ENCODE measurements at regions of chr2 and their contacts with region 1.

Region 1: DNA sequence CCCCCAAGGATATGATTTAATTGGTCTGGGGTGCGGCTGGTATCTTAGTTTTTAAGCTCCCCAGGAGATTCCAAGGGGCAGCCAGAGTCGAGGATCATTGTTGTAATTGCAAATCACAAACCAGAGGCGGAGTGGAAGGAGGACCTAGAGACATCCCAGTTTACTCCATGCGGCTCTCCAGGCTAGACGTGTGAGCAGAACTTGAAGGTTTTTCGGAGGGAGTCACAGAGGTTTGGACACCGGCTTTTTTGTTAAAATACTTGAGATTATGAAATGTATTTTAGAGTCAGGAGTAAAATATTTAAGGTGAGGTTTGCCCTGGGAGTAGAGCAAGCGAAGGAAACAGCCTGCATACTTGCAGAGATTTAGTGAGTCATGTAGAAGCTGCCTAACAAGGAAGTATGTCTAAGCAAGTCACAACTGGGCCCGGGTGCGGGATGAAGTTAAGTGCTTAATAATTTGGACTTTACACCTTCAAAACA is 39.5 kb downstream of the TGOLN2 start:
- DNase-seq: no peak
- H3K4me3 ChIP-seq: no peak overlapping the region
- H3K27ac ChIP-seq: no peak overlapping the region
- H3K4me1 ChIP-seq: no peaks in the 10 kb centered on the region
- H3K27me3 ChIP-seq: no peaks in the 10 kb centered on the region
- CTCF ChIP-seq: no peak
- POLR2A ChIP-seq: no peak

Region 2: GRCh38 chr2:84495539-84496146 is 792.6 kb before region 1 on chr2:
- CTCF ChIA-PET with region 1: no interaction called
- POLR2A ChIA-PET with region 1: no interaction called
- dilution Hi-C with region 1: no loop called
- intact Hi-C with region 1: loop called (anchors 10 kb)
- DNase-seq: peak; percentile 80
- H3K4me3 ChIP-seq: no peak overlapping the region
- H3K27ac ChIP-seq: peak overlapping the region; percentile 99
- H3K4me1 ChIP-seq: peaks cover 21% of the 10 kb centered on the region
- H3K27me3 ChIP-seq: no peaks in the 10 kb centered on the region
- CTCF ChIP-seq: peak; percentile 38 to 44
- POLR2A ChIP-seq: no peak

Region 3: GRCh38 chr2:85181134-85181631 is 107.1 kb before region 1 on chr2:
- CTCF ChIA-PET with region 1: interaction called, 4 read pairs
- POLR2A ChIA-PET with region 1: no interaction called
- dilution Hi-C with region 1: no loop called
- intact Hi-C with region 1: loop called (anchors 2 kb)
- DNase-seq: no peak
- H3K4me3 ChIP-seq: no peak overlapping the region
- H3K27ac ChIP-seq: no peak overlapping the region
- H3K4me1 ChIP-seq: peaks cover 42% of the 10 kb centered on the region
- H3K27me3 ChIP-seq: no peaks in the 10 kb centered on the region
- CTCF ChIP-seq: no peak
- POLR2A ChIP-seq: no peak

Region 4: DNA sequence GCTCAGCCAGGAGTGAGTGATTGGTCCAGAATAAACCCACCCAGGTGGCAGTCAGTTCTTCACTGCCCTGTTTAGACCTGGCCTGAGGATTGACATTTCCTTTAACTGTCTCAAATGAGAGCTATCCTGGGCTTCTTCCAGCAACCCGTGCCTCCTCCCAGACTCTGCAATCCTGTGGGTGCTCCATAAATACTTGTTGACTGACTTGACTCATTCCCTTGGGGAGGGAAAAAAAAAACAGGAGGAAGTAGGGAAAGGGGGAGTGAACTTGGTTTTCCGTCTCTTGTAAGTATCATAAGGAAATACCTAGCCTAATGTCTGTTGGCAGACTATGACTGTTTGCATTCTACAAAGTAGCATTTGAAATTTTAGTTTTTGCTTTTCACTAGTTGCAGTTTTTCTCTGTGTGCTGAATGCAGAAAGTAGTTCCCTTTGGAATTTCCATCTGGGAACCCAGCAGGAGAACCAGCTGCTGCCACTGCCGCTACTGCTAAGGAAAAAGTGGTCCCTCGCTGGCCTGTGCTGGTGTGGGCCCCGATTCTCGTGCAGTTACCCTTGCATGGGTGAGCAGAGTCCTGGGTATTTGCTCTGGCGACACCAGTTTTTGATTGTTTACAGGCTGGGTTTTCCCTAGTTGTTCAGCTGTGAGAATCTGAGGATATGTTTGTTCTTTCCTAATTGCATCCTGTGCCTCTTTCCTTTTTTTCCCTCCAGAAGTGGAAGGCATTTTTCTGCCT is 39.3 kb before region 1 on chr2:
- CTCF ChIA-PET with region 1: interaction called, 11 read pairs
- POLR2A ChIA-PET with region 1: no interaction called
- dilution Hi-C with region 1: no loop called
- intact Hi-C with region 1: no loop called
- DNase-seq: peak; percentile 72
- H3K4me3 ChIP-seq: no peak overlapping the region
- H3K27ac ChIP-seq: peak overlapping the region; percentile 6
- H3K4me1 ChIP-seq: peaks cover 30% of the 10 kb centered on the region
- H3K27me3 ChIP-seq: no peaks in the 10 kb centered on the region
- CTCF ChIP-seq: no peak
- POLR2A ChIP-seq: no peak

Region 5: DNA sequence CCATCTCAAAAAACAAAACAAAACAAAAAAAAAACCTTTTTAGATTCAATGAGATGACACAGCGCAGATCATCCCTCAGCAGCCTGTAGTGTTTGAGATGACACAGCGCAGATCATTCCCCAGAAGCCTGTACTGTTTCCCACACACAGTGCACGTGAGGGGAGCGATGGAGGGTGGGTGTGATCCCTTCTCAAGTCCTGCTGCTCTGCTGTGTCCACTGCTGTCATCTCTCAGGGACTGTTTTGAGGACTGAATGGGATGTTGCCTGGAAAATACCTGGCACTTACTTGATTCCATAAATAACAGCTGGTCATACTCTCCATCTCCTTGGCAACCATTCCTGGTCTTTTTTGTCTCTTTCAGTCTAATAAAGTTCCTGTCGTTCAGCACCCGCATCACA is 13.8 kb after region 1 on chr2:
- CTCF ChIA-PET with region 1: interaction called, 16 read pairs
- POLR2A ChIA-PET with region 1: no interaction called
- dilution Hi-C with region 1: no loop called
- intact Hi-C with region 1: loop called (anchors 1 kb)
- DNase-seq: no peak
- H3K4me3 ChIP-seq: no peak overlapping the region
- H3K27ac ChIP-seq: no peak overlapping the region
- H3K4me1 ChIP-seq: no peaks in the 10 kb centered on the region
- H3K27me3 ChIP-seq: no peaks in the 10 kb centered on the region
- CTCF ChIP-seq: no peak
- POLR2A ChIP-seq: no peak

Measured in endothelial cell of umbilical vein (primary cell).